Activated CD8-positive, alpha-beta memory T cell treated with anti-CD3 and anti-CD28 coated beads, Interleukin-2, amount 10 ng/mL, durations not matched to agents 7 days and 5 days (primary cell): ENCODE measurements at regions of chr20 and their contacts with region 1.

Region 1: GRCh38 chr20:21235484-21236445 is 67.4 kb upstream of the XRN2 start:
- DNase-seq: peak; percentile 74
- ATAC-seq: peak; percentile 73
- H3K4me3 Mint-ChIP-seq: no peak overlapping the region
- H3K27ac Mint-ChIP-seq: no peak overlapping the region
- H3K4me1 Mint-ChIP-seq: peaks cover 2% of the 10 kb centered on the region
- H3K27me3 Mint-ChIP-seq: no peaks in the 10 kb centered on the region

Region 2: DNA sequence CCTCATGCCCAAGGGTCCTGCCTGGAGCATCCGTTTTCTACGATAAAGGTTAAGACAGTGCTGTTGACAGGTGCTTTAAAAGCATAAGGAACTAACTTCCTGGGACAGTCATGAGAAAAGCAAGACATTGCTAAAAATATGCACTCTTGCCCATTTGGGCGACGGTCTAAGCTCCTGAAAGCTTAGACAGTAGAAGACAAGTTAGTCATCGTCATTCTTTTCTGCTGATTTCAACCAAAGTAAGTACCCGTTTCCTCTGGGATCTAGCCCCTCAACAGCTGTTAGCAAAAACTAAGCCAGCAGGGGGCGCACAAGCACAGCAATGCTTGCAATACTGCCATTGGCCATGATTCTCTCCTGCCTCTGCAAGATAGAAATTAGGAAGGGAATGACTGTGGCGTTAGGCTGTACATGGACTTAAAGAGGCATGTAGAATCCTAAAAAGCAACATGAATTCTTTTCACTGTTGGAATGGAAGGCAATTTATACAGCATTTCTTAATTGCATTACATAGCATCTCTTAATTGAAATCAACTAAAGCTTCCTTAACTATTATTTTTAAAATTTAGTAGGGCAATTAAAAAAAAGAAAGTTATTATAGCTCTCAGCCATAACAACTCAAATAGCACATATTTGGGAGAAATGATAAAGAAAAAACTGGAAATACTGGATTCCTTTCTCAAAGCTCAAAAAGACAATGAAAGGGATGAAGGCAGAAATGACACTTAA is 375.5 kb before region 1 on chr20:
- CTCF ChIA-PET with region 1: interaction called, 13 read pairs
- DNase-seq: peak; percentile 87
- ATAC-seq: peak; percentile 76
- H3K4me3 Mint-ChIP-seq: no peak overlapping the region
- H3K27ac Mint-ChIP-seq: no peak overlapping the region
- H3K4me1 Mint-ChIP-seq: no peaks in the 10 kb centered on the region
- H3K27me3 Mint-ChIP-seq: peaks cover 16% of the 10 kb centered on the region

Region 3: GRCh38 chr20:21027569-21027968 is 208.2 kb before region 1 on chr20:
- CTCF ChIA-PET with region 1: no interaction called
- DNase-seq: no peak
- ATAC-seq: no peak
- H3K4me3 Mint-ChIP-seq: no peak overlapping the region
- H3K27ac Mint-ChIP-seq: no peak overlapping the region
- H3K4me1 Mint-ChIP-seq: no peaks in the 10 kb centered on the region
- H3K27me3 Mint-ChIP-seq: peaks cover 25% of the 10 kb centered on the region

Region 4: GRCh38 chr20:21125849-21126580 is 109.8 kb before region 1 on chr20 and contains the start of gene KIZ:
- CTCF ChIA-PET with region 1: interaction called, 10 read pairs
- DNase-seq: peak; percentile 97
- ATAC-seq: peak; percentile 97
- H3K4me3 Mint-ChIP-seq: peak within 1 kb of the TSS; percentile 91
- H3K27ac Mint-ChIP-seq: peak within 1 kb of the TSS; percentile 91
- H3K4me1 Mint-ChIP-seq: peaks cover 37% of the 10 kb centered on the region
- H3K27me3 Mint-ChIP-seq: peaks cover 3% of the 10 kb centered on the region
- total RNA-seq, gene KIZ: 22.3 to 30.9 TPM

Region 5: GRCh38 chr20:21251278-21251677 is 15.5 kb after region 1 on chr20:
- CTCF ChIA-PET with region 1: interaction called, 13 read pairs
- DNase-seq: no peak
- ATAC-seq: no peak
- H3K4me3 Mint-ChIP-seq: no peak overlapping the region
- H3K27ac Mint-ChIP-seq: no peak overlapping the region
- H3K4me1 Mint-ChIP-seq: peaks cover 4% of the 10 kb centered on the region
- H3K27me3 Mint-ChIP-seq: no peaks in the 10 kb centered on the region

Region 6: DNA sequence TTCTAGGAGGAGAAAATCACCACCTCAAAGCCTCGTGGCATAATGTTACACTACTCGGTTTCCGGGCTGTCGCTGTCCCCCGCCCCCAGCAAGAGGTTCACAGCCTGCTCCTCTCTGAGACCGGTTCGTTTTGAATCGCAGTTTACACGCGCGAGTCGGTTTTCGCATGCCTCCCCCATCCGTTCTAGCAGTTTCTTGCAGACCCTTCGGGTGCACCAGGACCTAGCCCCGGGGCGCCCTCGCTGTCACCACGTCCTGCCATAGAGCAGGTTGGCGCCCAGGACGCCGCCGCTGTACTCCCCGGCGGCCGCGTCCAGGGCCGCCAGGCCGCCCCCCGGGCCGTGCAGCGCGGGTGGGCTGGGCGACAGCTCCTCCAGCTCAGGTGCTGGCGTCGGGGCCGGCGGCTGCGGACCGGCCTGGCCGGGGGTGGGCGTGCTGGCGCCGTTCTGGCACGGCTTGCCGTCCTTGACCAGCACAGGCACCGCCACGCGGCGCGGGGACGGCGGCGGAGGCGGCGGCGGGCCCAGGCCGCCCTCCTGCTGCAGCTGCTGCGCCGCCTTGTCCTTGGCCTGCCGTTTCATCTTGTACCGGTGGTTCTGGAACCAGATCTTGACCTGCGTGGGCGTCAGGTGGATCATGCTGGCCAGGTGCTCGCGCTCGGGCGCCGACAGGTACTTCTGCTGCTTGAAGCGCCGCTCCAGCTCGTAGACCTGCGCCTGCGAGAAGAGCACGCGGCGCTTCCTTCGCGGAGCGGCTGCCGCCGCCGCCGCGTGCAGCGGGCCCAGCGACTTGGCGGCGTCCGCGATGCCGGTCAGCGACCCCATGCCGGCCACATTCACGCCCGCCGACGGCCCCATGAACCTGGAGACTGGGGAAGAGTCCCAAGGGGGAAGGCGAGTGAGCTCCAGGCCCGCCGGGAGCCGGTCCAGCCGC is 160.2 kb after region 1 on chr20:
- CTCF ChIA-PET with region 1: interaction called, 21 read pairs
- DNase-seq: peak; percentile 56
- ATAC-seq: peak; percentile 64
- H3K4me3 Mint-ChIP-seq: peak overlapping the region; percentile 36
- H3K27ac Mint-ChIP-seq: peak overlapping the region; percentile 47
- H3K4me1 Mint-ChIP-seq: peaks cover 23% of the 10 kb centered on the region
- H3K27me3 Mint-ChIP-seq: peaks cover 80% of the 10 kb centered on the region